ENCODE measurements at regions of chr19 and their contacts with region 1.

Region 1: GRCh38 chr19:14786421-14786851 is 8.1 kb upstream of the ADGRE2 start:
- DNase-seq: peak; percentile 40
- H3K4me3 Mint-ChIP-seq: no peak overlapping the region
- H3K27ac Mint-ChIP-seq: no peak overlapping the region
- H3K4me1 Mint-ChIP-seq: peaks cover 16% of the 10 kb centered on the region
- H3K27me3 Mint-ChIP-seq: peaks cover 18% of the 10 kb centered on the region

Region 2: DNA sequence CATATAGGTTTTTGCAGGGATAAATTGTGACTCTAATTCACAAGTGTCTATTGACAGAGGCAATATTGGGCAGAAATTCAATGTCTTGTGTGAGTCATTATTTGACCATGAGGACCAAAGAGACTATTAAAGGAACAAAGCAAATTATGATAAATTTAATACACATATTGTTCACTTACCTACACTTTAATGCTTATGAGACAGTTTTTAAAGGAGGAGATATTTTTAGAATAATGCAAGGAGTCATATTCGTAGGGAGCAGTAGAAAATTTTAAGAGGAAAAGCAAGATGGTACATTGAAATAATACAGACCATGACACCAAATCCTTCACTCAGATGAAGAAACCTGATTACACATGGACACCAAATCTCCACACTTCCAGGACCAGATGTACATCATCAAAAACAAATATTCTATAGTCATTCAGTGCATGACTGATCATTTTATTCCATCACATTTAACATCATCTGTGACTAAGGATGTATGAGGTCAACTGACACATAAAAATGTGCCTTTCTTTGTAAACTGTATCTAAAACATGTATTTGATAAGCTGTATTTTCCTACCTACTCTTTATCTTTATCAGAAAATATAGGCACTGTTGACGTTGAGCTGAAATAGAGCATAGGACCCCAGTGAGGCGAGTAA is 103.7 kb after region 1 on chr19:
- CTCF ChIA-PET with region 1: no interaction called
- POLR2A ChIA-PET with region 1: no interaction called
- intact Hi-C with region 1: loop called (anchors 2 kb)
- DNase-seq: no peak
- H3K4me3 Mint-ChIP-seq: no peak overlapping the region
- H3K27ac Mint-ChIP-seq: no peak overlapping the region
- H3K4me1 Mint-ChIP-seq: peaks cover 5% of the 10 kb centered on the region
- H3K27me3 Mint-ChIP-seq: peaks cover 23% of the 10 kb centered on the region

Measured in activated CD4-positive, alpha-beta memory T cell treated with anti-CD3 and anti-CD28 coated beads for 36 hours (primary cell).